ENCODE measurements at regions of chr3 and their contacts with region 1.

Region 1: GRCh38 chr3:99920481-99921376 is 103.1 kb downstream of the CMSS1 start:
- DNase-seq: peak; percentile 50 to 81
- H3K4me3 ChIP-seq: no peak overlapping the region
- H3K4me3 Mint-ChIP-seq: peak overlapping the region; percentile 32
- H3K27ac Mint-ChIP-seq: peak overlapping the region; percentile 66
- H3K4me1 ChIP-seq: peaks cover 65% of the 10 kb centered on the region
- H3K4me1 Mint-ChIP-seq: peaks cover 54% of the 10 kb centered on the region
- H3K27me3 ChIP-seq: no peaks in the 10 kb centered on the region
- H3K27me3 Mint-ChIP-seq: no peaks in the 10 kb centered on the region
- CTCF ChIP-seq: no peak

Region 2: GRCh38 chr3:99895703-99896441 is 24.9 kb before region 1 on chr3:
- CTCF ChIA-PET with region 1: no interaction called
- POLR2A ChIA-PET with region 1: interaction called, 4 read pairs
- intact Hi-C with region 1: loop called (anchors 1 kb)
- DNase-seq: peak; percentile 52 to 66
- H3K4me3 ChIP-seq: no peak overlapping the region
- H3K4me3 Mint-ChIP-seq: peak overlapping the region; percentile 42
- H3K27ac Mint-ChIP-seq: peak overlapping the region; percentile 89
- H3K4me1 ChIP-seq: peaks cover 38% of the 10 kb centered on the region
- H3K4me1 Mint-ChIP-seq: peaks cover 20% of the 10 kb centered on the region
- H3K27me3 ChIP-seq: no peaks in the 10 kb centered on the region
- H3K27me3 Mint-ChIP-seq: no peaks in the 10 kb centered on the region
- CTCF ChIP-seq: no peak

Region 3: DNA sequence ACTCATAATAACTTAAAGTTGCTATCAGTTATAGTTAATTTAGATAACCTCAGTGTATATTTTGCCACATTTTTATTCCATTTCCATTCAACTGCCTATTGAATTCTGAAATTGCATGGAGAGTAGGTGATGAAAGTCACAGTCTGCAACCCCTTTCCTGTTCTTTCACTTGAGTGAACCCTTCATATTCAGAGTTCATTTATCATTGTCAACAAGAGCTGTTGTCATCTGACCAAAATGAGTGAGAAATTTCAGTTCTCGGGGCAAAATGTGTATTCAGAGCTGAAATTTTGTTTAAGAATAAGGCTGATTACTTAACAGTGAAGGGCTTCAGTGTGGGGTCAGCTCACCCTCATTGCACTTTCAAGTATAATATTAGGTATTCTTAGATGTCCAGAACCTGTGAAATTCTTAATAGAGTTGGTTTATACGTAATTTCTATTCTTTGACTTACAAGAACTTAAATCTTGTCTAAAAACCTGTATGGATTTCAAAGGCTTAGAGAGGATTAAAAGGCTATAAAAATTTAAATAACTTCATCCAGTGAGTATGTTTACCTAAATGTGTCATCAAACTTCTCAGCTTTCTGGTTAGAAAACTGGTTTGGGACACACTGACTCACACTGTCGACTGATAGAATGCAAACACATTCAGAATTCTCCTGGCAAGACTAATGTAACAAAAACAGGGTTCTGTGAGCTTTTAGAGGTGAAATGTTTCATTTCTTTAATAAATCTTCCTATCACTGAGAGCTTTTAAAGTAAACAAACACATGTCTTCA is 10.8 kb before region 1 on chr3:
- CTCF ChIA-PET with region 1: no interaction called
- POLR2A ChIA-PET with region 1: no interaction called
- intact Hi-C with region 1: loop called (anchors 1 kb)
- DNase-seq: peak in 1 of 2 experiments; percentile 55
- H3K4me3 ChIP-seq: no peak overlapping the region
- H3K4me3 Mint-ChIP-seq: peak overlapping the region; percentile 35
- H3K27ac Mint-ChIP-seq: peak overlapping the region; percentile 81
- H3K4me1 ChIP-seq: peaks cover 34% of the 10 kb centered on the region
- H3K4me1 Mint-ChIP-seq: peaks cover 29% of the 10 kb centered on the region
- H3K27me3 ChIP-seq: no peaks in the 10 kb centered on the region
- H3K27me3 Mint-ChIP-seq: no peaks in the 10 kb centered on the region
- CTCF ChIP-seq: no peak